ENCODE measurements at regions of chr6 and their contacts with region 1.

Region 1: GRCh38 chr6:119078376-119079282 is at the start of gene FAM184A:
- DNase-seq: peak; percentile 74
- H3K4me3 Mint-ChIP-seq: peak within 1 kb of the TSS; percentile 86
- H3K27ac Mint-ChIP-seq: peak within 1 kb of the TSS; percentile 96
- H3K4me1 Mint-ChIP-seq: peaks cover 42% of the 10 kb centered on the region
- H3K27me3 Mint-ChIP-seq: no peaks in the 10 kb centered on the region
- total RNA-seq, gene FAM184A: 13.5 to 14.0 TPM

Region 2: GRCh38 chr6:117568831-117569410 is 1509.7 kb before region 1 on chr6:
- CTCF ChIA-PET with region 1: no interaction called
- intact Hi-C with region 1: loop called (anchors 5 kb)
- DNase-seq: no peak
- H3K4me3 Mint-ChIP-seq: no peak overlapping the region
- H3K27ac Mint-ChIP-seq: no peak overlapping the region
- H3K4me1 Mint-ChIP-seq: peaks cover 19% of the 10 kb centered on the region
- H3K27me3 Mint-ChIP-seq: no peaks in the 10 kb centered on the region

Region 3: DNA sequence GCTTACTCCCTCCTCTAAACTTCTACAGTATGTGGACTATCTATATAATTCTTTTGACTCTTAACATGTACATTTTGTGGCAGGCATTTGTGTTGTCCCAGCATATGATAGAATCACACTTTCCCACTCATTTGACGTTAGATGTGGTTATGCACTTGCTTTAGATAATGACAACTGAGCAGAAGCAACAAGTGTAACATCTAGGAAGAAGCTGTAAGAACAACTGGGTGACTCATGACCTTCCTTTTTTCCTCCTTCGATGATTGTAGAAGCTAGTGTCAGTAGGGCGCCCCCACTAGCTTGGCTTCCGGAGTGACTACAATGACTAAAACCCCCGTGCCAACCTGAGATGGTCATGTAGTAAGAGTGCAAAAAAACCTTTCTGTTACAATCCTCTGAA is 352.7 kb before region 1 on chr6:
- CTCF ChIA-PET with region 1: no interaction called
- intact Hi-C with region 1: loop called (anchors 1 kb)
- DNase-seq: peak; percentile 93
- H3K4me3 Mint-ChIP-seq: peak overlapping the region; percentile 26
- H3K27ac Mint-ChIP-seq: peak overlapping the region; percentile 91
- H3K4me1 Mint-ChIP-seq: peaks cover 55% of the 10 kb centered on the region
- H3K27me3 Mint-ChIP-seq: no peaks in the 10 kb centered on the region

Region 4: GRCh38 chr6:118893807-118894424 is 184.7 kb before region 1 on chr6 and contains the start of gene ASF1A:
- CTCF ChIA-PET with region 1: interaction called, 8 read pairs
- intact Hi-C with region 1: loop called (anchors 1 kb)
- DNase-seq: peak; percentile 98
- H3K4me3 Mint-ChIP-seq: peak within 1 kb of the TSS; percentile 88
- H3K27ac Mint-ChIP-seq: peak within 1 kb of the TSS; percentile 97
- H3K4me1 Mint-ChIP-seq: peaks cover 50% of the 10 kb centered on the region
- H3K27me3 Mint-ChIP-seq: no peaks in the 10 kb centered on the region
- total RNA-seq, gene ASF1A: 30.3 to 31.4 TPM

Region 5: DNA sequence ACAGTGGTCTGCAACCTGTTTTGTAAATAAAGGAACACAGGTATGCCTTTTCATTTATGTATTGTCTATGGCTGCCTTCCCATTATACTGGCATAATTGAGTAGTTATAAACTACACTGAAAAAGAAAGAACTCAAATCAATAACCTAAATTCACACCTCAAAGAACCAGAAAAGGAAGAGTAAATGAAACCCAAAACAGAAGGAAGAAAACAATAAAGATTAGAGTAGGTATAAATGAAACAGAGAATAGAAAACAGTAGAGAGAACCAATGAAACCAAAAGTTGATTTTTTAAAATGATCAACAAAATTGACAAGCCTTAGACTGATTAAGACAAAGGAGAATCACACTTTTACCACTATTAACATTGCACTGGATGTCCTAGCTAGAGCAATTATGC is 34.8 kb before region 1 on chr6:
- CTCF ChIA-PET with region 1: no interaction called
- intact Hi-C with region 1: loop called (anchors 1 kb)
- DNase-seq: no peak
- H3K4me3 Mint-ChIP-seq: no peak overlapping the region
- H3K27ac Mint-ChIP-seq: no peak overlapping the region
- H3K4me1 Mint-ChIP-seq: peaks cover 32% of the 10 kb centered on the region
- H3K27me3 Mint-ChIP-seq: no peaks in the 10 kb centered on the region

Region 6: GRCh38 chr6:119110601-119111548 is 32.2 kb after region 1 on chr6:
- CTCF ChIA-PET with region 1: interaction called, 13 read pairs
- intact Hi-C with region 1: loop called (anchors 1 kb)
- DNase-seq: peak; percentile 62
- H3K4me3 Mint-ChIP-seq: no peak overlapping the region
- H3K27ac Mint-ChIP-seq: no peak overlapping the region
- H3K4me1 Mint-ChIP-seq: peaks cover 22% of the 10 kb centered on the region
- H3K27me3 Mint-ChIP-seq: no peaks in the 10 kb centered on the region

Region 7: GRCh38 chr6:119241111-119241465 is 162.5 kb after region 1 on chr6:
- CTCF ChIA-PET with region 1: no interaction called
- intact Hi-C with region 1: no loop called
- DNase-seq: no peak
- H3K4me3 Mint-ChIP-seq: no peak overlapping the region
- H3K27ac Mint-ChIP-seq: no peak overlapping the region
- H3K4me1 Mint-ChIP-seq: no peaks in the 10 kb centered on the region
- H3K27me3 Mint-ChIP-seq: no peaks in the 10 kb centered on the region

Region 8: GRCh38 chr6:119349323-119350042 is 270.9 kb after region 1 on chr6 and contains the start of gene MAN1A1:
- CTCF ChIA-PET with region 1: no interaction called
- intact Hi-C with region 1: loop called (anchors 1 kb)
- DNase-seq: peak; percentile 88
- H3K4me3 Mint-ChIP-seq: peak within 1 kb of the TSS; percentile 84
- H3K27ac Mint-ChIP-seq: peak within 1 kb of the TSS; percentile 96
- H3K4me1 Mint-ChIP-seq: peaks cover 37% of the 10 kb centered on the region
- H3K27me3 Mint-ChIP-seq: no peaks in the 10 kb centered on the region
- total RNA-seq, gene MAN1A1: 14.8 to 15.1 TPM

Region 9: DNA sequence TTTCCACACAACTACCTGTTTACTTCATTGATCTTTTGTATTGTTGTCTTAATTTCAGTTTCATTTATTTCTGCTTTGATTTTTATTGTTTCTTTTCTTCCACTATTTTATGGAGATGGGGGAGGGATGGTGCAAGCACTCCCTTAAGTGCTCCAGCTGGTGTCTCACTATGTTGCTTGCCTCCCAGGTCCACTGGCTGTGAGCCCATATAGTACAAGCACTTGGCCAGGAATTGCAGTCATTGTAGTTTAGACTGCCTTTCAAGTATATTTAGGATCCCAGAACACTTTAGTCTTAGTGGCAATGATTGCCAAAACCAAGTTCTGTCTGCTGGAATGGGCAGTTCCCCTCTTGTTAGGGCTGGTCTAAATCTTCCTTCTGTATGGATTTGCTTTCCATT is 305.8 kb after region 1 on chr6:
- CTCF ChIA-PET with region 1: no interaction called
- intact Hi-C with region 1: no loop called
- DNase-seq: no peak
- H3K4me3 Mint-ChIP-seq: no peak overlapping the region
- H3K27ac Mint-ChIP-seq: no peak overlapping the region
- H3K4me1 Mint-ChIP-seq: no peaks in the 10 kb centered on the region
- H3K27me3 Mint-ChIP-seq: no peaks in the 10 kb centered on the region

Measured in activated naive CD4-positive, alpha-beta T cell treated with anti-CD3 and anti-CD28 coated beads for 36 hours (primary cell).